MCF 10A (cell line): ENCODE measurements at regions of chr6 and their contacts with region 1.

Region 1: DNA sequence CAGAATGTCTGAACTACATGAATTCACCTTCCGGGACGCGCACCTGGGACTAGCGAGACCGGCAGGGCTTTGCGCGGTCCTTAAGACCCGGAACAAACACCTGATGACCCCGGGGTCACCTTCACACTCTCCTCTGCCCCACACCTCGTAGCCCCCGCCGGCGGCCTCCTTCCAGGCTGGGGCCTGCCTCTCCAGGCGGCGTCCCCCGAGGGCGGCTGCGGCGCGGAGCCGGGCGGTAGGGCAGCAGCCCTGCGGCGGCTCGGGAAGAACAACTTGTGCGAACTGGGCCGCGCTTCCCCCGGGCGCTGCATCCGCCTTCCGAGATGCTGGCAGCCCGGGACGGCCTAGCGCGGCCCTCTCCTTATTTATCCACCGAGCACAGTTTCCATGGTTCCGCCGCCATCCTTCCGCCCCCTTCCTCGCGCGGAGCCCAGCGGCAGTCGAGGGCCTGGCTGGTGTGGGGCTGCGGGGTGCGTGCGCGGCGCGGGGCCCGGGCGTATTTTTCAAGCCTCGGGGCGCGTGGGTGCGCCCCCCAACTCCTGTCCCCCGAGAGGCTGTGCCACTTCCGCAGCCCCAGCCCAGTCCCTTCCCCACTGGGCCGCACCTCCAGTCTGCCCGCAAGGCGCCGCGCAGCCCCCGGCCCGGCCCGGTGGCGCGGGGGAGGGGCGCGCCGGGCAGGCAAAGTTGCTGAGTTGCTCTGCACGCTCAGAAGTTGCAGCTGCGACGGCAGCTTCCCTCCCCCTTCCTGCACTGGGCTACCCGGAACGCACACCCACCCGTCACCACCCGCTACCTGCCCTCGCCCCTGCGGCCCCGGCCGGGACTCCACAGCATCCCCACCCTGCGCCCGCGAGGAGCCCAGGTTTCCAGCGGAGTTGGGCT is 56.3 kb upstream of the RREB1 start:
- DNase-seq: no peak
- H3K4me3 Mint-ChIP-seq: no peak overlapping the region
- H3K27ac Mint-ChIP-seq: peak overlapping the region; percentile 93
- H3K4me1 Mint-ChIP-seq: peaks cover 21% of the 10 kb centered on the region
- H3K27me3 Mint-ChIP-seq: no peaks in the 10 kb centered on the region
- CTCF ChIP-seq: no peak

Region 2: GRCh38 chr6:6788394-6789020 is 263.0 kb before region 1 on chr6:
- CTCF ChIA-PET with region 1: interaction called, 3 read pairs
- POLR2A ChIA-PET with region 1: interaction called, 3 read pairs
- intact Hi-C with region 1: loop called (anchors 10 kb)
- DNase-seq: peak; percentile 54
- H3K4me3 Mint-ChIP-seq: no peak overlapping the region
- H3K27ac Mint-ChIP-seq: peak overlapping the region; percentile 33
- H3K4me1 Mint-ChIP-seq: peaks cover 43% of the 10 kb centered on the region
- H3K27me3 Mint-ChIP-seq: no peaks in the 10 kb centered on the region
- CTCF ChIP-seq: peak; percentile 38